HCT116 (cell line): ENCODE measurements at regions of chr20 and their contacts with region 1.

Region 1: GRCh38 chr20:33666293-33667244 is at the start of gene ACTL10:
- DNase-seq: no peak
- ATAC-seq: no peak
- H3K4me3 ChIP-seq: no peak within 1 kb of the TSS
- H3K27ac ChIP-seq: peak within 1 kb of the TSS; percentile 17; the same call in 1 of the 2 replicates
- H3K4me1 ChIP-seq: peaks cover 9 to 22% of the 10 kb centered on the region in 2 experiments
- H3K27me3 ChIP-seq: no peaks in the 10 kb centered on the region
- CTCF ChIP-seq: no peak
- POLR2A ChIP-seq: no peak
- RAD21 ChIP-seq: no peak
- total RNA-seq, gene ACTL10: 0.22 TPM

Region 2: GRCh38 chr20:33459599-33459998 is 207.0 kb before region 1 on chr20:
- CTCF ChIA-PET with region 1: interaction called, 5 read pairs
- POLR2A ChIA-PET with region 1: no interaction called
- RAD21 ChIA-PET with region 1: no interaction called
- intact Hi-C with region 1: loop called (anchors 5 kb)
- DNase-seq: no peak
- ATAC-seq: no peak
- H3K4me3 ChIP-seq: no peak overlapping the region
- H3K27ac ChIP-seq: no peak overlapping the region
- H3K4me1 ChIP-seq: peaks cover 0 to 9% of the 10 kb centered on the region in 2 experiments; a peak in 2 of 4 replicates
- H3K27me3 ChIP-seq: no peaks in the 10 kb centered on the region
- CTCF ChIP-seq: no peak
- POLR2A ChIP-seq: no peak
- RAD21 ChIP-seq: no peak

Region 3: GRCh38 chr20:33653218-33653899 is 13.2 kb before region 1 on chr20:
- CTCF ChIA-PET with region 1: interaction called, 13 read pairs
- POLR2A ChIA-PET with region 1: interaction called, 6 read pairs
- RAD21 ChIA-PET with region 1: no interaction called
- intact Hi-C with region 1: no loop called
- DNase-seq: peak; percentile 35
- ATAC-seq: peak; percentile 76
- H3K4me3 ChIP-seq: no peak overlapping the region
- H3K27ac ChIP-seq: no peak overlapping the region
- H3K4me1 ChIP-seq: peaks cover 0 to 16% of the 10 kb centered on the region in 2 experiments; a peak in 1 of 4 replicates
- H3K27me3 ChIP-seq: no peaks in the 10 kb centered on the region
- CTCF ChIP-seq: peak; percentile 75 to 92 (median 78)
- POLR2A ChIP-seq: no peak
- RAD21 ChIP-seq: peak; percentile 89

Region 4: GRCh38 chr20:34693414-34693813 is 1026.8 kb after region 1 on chr20:
- CTCF ChIA-PET with region 1: no interaction called
- POLR2A ChIA-PET with region 1: no interaction called
- RAD21 ChIA-PET with region 1: interaction called in 1 of 2 experiments, 10 read pairs
- intact Hi-C with region 1: no loop called
- DNase-seq: no peak
- ATAC-seq: no peak
- H3K4me3 ChIP-seq: no peak overlapping the region
- H3K27ac ChIP-seq: no peak overlapping the region
- H3K4me1 ChIP-seq: no peaks in the 10 kb centered on the region
- H3K27me3 ChIP-seq: no peaks in the 10 kb centered on the region
- CTCF ChIP-seq: no peak
- POLR2A ChIP-seq: no peak
- RAD21 ChIP-seq: no peak